ENCODE measurements at regions of chr5 and their contacts with region 1.

Region 1: GRCh38 chr5:148820461-148821395 is 5.7 kb upstream of the ADRB2 start:
- DNase-seq: peak in 4 of 5 donors; percentile 16 to 42 (median 32)
- H3K4me3 ChIP-seq: no peak overlapping the region
- H3K4me3 Mint-ChIP-seq: no peak overlapping the region
- H3K27ac ChIP-seq: no peak overlapping the region
- H3K27ac Mint-ChIP-seq: no peak overlapping the region
- H3K4me1 ChIP-seq: peaks cover 7% of the 10 kb centered on the region
- H3K4me1 Mint-ChIP-seq: peaks cover 6 to 16% (median 8%) of the 10 kb centered on the region in 4 donors
- H3K27me3 ChIP-seq: no peaks in the 10 kb centered on the region
- H3K27me3 Mint-ChIP-seq: peaks cover 0 to 1% of the 10 kb centered on the region in 2 donors

Region 2: DNA sequence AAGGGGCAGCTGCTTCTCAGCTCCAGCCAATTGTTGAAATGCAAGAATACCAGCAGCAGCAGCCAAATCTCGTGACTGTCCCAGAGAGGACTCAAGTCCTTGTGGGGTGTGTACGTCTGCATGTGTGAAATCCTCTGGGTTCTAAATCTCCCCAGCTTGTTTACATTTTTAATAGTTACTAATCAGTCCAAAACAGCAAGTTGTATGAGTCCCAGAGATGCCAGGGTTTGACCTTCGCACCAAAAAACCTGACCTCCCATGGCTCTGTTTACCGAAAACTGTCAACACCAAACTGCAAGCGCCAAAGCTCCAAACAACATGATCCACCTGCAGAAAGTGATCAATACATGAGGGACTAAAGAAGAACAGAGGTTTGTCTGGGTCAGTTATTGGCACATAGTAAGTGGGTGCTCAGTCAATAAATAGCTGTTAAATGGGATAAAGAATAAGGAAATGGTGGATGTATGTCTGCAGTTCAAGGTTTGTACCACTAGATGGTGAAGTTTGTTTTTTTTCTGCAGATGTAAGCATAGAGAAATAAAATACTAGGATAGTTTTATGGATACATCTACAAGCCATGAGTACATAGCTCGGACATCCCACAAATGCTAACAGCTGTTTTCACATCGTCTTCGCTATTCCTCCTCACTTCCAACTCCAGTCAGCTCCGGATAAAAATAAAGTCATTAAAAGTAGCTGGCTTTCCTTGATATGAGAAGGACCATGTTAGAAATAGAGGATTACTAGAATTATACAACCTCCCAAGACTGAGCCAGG is 79.6 kb before region 1 on chr5:
- CTCF ChIA-PET with region 1: interaction called, 17 read pairs
- POLR2A ChIA-PET with region 1: no interaction called
- intact Hi-C with region 1: loop called (anchors 2 kb)
- DNase-seq: peak in 4 of 5 donors; percentile 28 to 35 (median 32)
- H3K4me3 ChIP-seq: no peak overlapping the region
- H3K4me3 Mint-ChIP-seq: no peak overlapping the region
- H3K27ac ChIP-seq: no peak overlapping the region
- H3K27ac Mint-ChIP-seq: no peak overlapping the region
- H3K4me1 ChIP-seq: no peaks in the 10 kb centered on the region
- H3K4me1 Mint-ChIP-seq: no peaks in the 10 kb centered on the region
- H3K27me3 ChIP-seq: no peaks in the 10 kb centered on the region
- H3K27me3 Mint-ChIP-seq: peaks cover 4 to 15% of the 10 kb centered on the region in 2 donors

Region 3: DNA sequence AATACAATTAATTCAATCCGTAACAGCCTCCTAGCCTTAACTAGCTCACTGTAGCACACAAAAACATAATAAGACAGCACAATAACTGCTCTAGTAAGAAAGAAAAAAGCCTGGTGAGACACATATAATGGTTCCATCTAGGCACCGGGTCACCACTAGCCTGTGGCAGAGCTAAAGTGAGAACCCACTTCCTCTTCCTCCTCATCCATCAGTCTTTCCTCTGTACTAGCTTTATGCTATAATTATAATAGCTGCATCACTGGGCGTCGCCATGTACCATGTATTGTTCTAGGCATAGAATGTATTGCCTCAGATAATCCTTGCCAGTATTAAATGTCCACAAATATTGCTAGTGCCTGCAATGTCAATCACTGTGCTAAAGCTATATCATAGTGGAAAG is 28.7 kb after region 1 on chr5:
- CTCF ChIA-PET with region 1: interaction called, 15 read pairs
- POLR2A ChIA-PET with region 1: interaction called, 73 read pairs
- intact Hi-C with region 1: no loop called
- DNase-seq: peak; percentile 49 to 71 (median 60)
- H3K4me3 ChIP-seq: no peak overlapping the region
- H3K4me3 Mint-ChIP-seq: peak overlapping the region in 7 of 8 donors; percentile 1 to 87 (median 64)
- H3K27ac ChIP-seq: peak overlapping the region; percentile 30
- H3K27ac Mint-ChIP-seq: peak overlapping the region; percentile 6 to 98 (median 92)
- H3K4me1 ChIP-seq: peaks cover 84% of the 10 kb centered on the region
- H3K4me1 Mint-ChIP-seq: peaks cover 55 to 91% (median 68%) of the 10 kb centered on the region in 4 donors
- H3K27me3 ChIP-seq: no peaks in the 10 kb centered on the region
- H3K27me3 Mint-ChIP-seq: no peaks in the 10 kb centered on the region

Region 4: GRCh38 chr5:148957591-148958202 is 137.0 kb after region 1 on chr5:
- CTCF ChIA-PET with region 1: interaction called, 77 read pairs
- POLR2A ChIA-PET with region 1: interaction called, 9 read pairs
- intact Hi-C with region 1: loop called (anchors 1 kb)
- DNase-seq: peak; percentile 31 to 45 (median 40)
- H3K4me3 ChIP-seq: no peak overlapping the region
- H3K4me3 Mint-ChIP-seq: no peak overlapping the region
- H3K27ac ChIP-seq: no peak overlapping the region
- H3K27ac Mint-ChIP-seq: no peak overlapping the region
- H3K4me1 ChIP-seq: no peaks in the 10 kb centered on the region
- H3K4me1 Mint-ChIP-seq: peaks cover 0 to 3% (median under 1%) of the 10 kb centered on the region in 4 donors
- H3K27me3 ChIP-seq: no peaks in the 10 kb centered on the region
- H3K27me3 Mint-ChIP-seq: peaks cover 0 to 3% of the 10 kb centered on the region in 2 donors

Region 5: GRCh38 chr5:148998174-148998797 is 177.6 kb after region 1 on chr5:
- CTCF ChIA-PET with region 1: interaction called, 6 read pairs
- POLR2A ChIA-PET with region 1: no interaction called
- intact Hi-C with region 1: loop called (anchors 1 kb)
- DNase-seq: peak; percentile 44 to 55 (median 49)
- H3K4me3 ChIP-seq: no peak overlapping the region
- H3K4me3 Mint-ChIP-seq: no peak overlapping the region
- H3K27ac ChIP-seq: no peak overlapping the region
- H3K27ac Mint-ChIP-seq: no peak overlapping the region
- H3K4me1 ChIP-seq: no peaks in the 10 kb centered on the region
- H3K4me1 Mint-ChIP-seq: peaks cover 0 to 2% (median 0%) of the 10 kb centered on the region in 4 donors
- H3K27me3 ChIP-seq: no peaks in the 10 kb centered on the region
- H3K27me3 Mint-ChIP-seq: peaks cover 6% of the 10 kb centered on the region in 2 donors

Region 6: GRCh38 chr5:149268928-149269557 is 448.3 kb after region 1 on chr5:
- CTCF ChIA-PET with region 1: no interaction called
- POLR2A ChIA-PET with region 1: no interaction called
- intact Hi-C with region 1: loop called (anchors 5 kb)
- DNase-seq: peak in 4 of 5 donors; percentile 42 to 62 (median 59)
- H3K4me3 ChIP-seq: no peak overlapping the region
- H3K4me3 Mint-ChIP-seq: peak overlapping the region in 1 of 8 donors; percentile 33
- H3K27ac ChIP-seq: no peak overlapping the region
- H3K27ac Mint-ChIP-seq: peak overlapping the region in 1 of 7 donors; percentile 69
- H3K4me1 ChIP-seq: peaks cover 4% of the 10 kb centered on the region
- H3K4me1 Mint-ChIP-seq: peaks cover 8 to 15% (median 11%) of the 10 kb centered on the region in 4 donors
- H3K27me3 ChIP-seq: peaks cover 22% of the 10 kb centered on the region
- H3K27me3 Mint-ChIP-seq: peaks cover 24 to 28% of the 10 kb centered on the region in 2 donors